ENCODE measurements at regions of chr2 and their contacts with region 1.

Region 1: DNA sequence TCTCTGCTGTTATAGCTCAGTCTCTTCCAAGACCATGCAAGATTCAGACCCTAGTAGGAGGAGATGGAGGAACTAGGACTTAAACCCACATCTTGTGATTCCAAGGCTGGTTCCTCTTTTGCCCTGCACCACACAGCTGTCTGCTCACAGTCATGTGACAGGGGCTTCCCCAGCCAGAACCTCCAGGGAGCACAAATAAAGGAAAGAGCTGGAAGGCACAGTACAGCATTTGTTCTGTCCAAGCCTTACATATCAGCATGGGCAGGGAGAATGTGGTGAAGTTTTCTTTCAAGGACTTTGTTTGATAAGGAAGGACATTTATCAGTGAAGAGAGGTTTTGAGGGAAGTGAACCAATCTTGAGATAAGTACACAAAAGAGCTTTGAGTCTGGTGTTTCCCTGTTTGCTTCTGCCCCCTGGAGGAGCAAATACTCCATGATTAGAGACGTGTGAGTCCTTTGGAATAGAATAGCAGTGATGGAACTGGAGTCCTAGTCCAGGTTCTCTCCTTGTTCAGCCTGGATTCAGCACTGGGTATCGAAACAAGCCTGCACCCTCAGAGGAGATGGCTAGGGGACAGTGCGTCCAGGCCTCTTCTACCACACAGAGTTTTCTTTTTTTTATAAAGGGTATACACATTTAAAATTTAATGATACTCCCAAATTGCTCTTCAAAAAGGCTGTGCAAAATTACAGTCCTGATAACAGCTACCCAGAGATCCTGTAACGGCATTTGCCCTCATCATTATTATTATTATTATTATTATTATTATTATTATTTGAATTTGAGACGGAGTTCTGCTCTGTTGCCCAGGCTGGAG is 24.6 kb upstream of the CASP10 start:
- DNase-seq: peak in 13 of 14 experiments; percentile 20 to 84 (median 50)
- ATAC-seq: peak; percentile 93
- H3K4me3 ChIP-seq: no peak overlapping the region
- H3K4me3 Mint-ChIP-seq: no peak overlapping the region
- H3K27ac ChIP-seq: peak overlapping the region; percentile 52 to 63
- H3K27ac Mint-ChIP-seq: peak overlapping the region; percentile 82
- H3K4me1 ChIP-seq: peaks cover 13% of the 10 kb centered on the region
- H3K4me1 Mint-ChIP-seq: peaks cover 12% of the 10 kb centered on the region
- H3K27me3 ChIP-seq: no peaks in the 10 kb centered on the region
- H3K27me3 Mint-ChIP-seq: no peaks in the 10 kb centered on the region
- CTCF ChIP-seq: peak; percentile 70

Region 2: DNA sequence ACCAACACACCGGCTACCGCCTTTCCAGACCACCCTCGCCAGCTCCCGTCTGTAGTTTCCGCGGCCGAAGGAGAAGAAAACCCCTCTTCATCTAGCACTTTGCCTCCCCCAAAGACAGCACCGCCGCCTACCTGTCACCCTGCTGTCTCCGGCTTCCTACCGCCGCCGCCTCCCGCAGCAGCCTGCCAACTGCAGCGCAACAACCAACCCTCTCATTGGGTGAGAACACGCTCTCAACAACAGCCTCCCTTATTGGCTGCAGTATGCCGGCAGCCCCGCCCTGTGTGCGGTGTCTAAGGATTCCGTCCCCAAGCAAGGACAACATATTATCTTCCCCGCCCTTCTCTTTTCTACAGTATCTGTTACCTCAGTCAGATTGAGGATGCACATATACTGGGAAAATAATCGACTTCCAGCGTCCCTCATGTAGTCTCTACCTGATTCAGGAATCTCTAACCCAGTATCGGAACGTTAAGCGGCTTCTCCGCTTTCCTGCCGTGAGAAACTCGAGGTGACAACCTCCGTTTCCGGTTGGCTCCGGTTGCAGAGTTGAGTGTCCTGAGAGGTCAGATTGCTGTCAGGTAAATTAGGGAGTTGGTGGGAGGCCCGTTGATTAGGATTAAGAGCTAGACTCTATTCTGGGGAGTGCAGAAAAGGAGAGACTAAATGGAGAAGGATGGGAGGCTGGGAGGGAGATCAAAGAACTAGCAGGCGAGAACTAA is 86.7 kb before region 1 on chr2 and contains the starts of genes HYCC2 and NDUFB3:
- CTCF ChIA-PET with region 1: interaction called, 14 read pairs
- POLR2A ChIA-PET with region 1: interaction called, 7 read pairs
- intact Hi-C with region 1: loop called (anchors 1 to 2 kb)
- DNase-seq: peak; percentile 85 to 98 (median 90)
- ATAC-seq: peak; percentile 92
- H3K4me3 ChIP-seq: peak within 1 kb of the TSS; percentile 87
- H3K4me3 Mint-ChIP-seq: peak within 1 kb of the TSS; percentile 99
- H3K27ac ChIP-seq: peak within 1 kb of the TSS; percentile 84 to 93
- H3K27ac Mint-ChIP-seq: peak within 1 kb of the TSS; percentile 97
- H3K4me1 ChIP-seq: peaks cover 18% of the 10 kb centered on the region
- H3K4me1 Mint-ChIP-seq: peaks cover 50% of the 10 kb centered on the region
- H3K27me3 ChIP-seq: no peaks in the 10 kb centered on the region
- H3K27me3 Mint-ChIP-seq: no peaks in the 10 kb centered on the region
- CTCF ChIP-seq: peak; percentile 39
- total RNA-seq, gene HYCC2: 29.2 to 30.7 TPM
- total RNA-seq, gene NDUFB3: 10.1 to 13.6 TPM

Region 3: GRCh38 chr2:201130524-201131186 is 27.7 kb before region 1 on chr2:
- CTCF ChIA-PET with region 1: interaction called, 7 read pairs
- POLR2A ChIA-PET with region 1: interaction called, 10 read pairs
- intact Hi-C with region 1: no loop called
- DNase-seq: peak in 7 of 14 experiments; percentile 25 to 75 (median 48)
- ATAC-seq: peak; percentile 71
- H3K4me3 ChIP-seq: peak overlapping the region; percentile 25
- H3K4me3 Mint-ChIP-seq: peak overlapping the region; percentile 46
- H3K27ac ChIP-seq: peak overlapping the region; percentile 67 to 69
- H3K27ac Mint-ChIP-seq: peak overlapping the region; percentile 96
- H3K4me1 ChIP-seq: peaks cover 80% of the 10 kb centered on the region
- H3K4me1 Mint-ChIP-seq: peaks cover 78% of the 10 kb centered on the region
- H3K27me3 ChIP-seq: no peaks in the 10 kb centered on the region
- H3K27me3 Mint-ChIP-seq: no peaks in the 10 kb centered on the region
- CTCF ChIP-seq: no peak

Region 4: DNA sequence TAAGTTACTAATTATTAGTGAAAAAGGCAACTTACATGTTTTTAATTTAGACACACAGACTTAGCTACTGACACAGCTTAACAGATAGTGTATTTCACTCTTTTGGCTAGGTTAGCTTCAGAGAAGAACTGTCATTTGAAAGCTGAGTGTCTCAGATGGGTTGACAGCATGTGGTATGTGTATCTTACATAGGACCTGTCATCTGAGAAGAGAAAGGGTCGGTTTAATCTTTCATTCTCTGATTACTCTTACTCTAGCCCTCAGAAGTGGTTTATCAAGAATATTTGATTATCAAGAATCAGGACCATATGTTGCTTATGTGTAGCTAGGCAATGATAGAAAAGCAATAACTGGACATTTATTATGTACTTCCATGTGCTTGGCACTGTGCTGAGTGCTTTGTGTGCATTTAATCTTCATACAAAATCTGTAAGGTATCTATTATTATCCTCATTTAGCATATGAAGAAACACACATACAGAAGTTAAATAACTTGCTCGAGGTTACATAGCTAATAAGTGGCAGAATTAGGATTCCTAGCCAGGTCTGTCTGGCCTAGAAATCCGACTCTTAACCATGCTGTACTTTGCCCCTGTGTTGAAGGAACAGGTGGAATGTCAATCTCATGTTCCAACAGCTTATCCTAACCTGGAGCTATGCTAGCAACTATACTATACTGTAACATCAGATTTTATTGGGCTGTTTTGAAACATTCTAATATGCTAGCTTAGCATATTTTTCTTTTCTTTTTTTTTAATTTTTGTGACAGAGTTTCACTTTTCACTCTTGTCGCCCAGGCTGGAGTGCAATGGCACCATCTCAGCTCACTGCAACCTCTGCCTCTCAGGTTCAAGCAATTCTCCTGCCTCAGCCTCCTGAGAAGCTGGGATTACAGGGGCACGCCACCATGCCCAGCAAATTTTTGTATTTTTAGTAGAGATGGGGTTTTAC is 13.9 kb before region 1 on chr2:
- CTCF ChIA-PET with region 1: interaction called, 16 read pairs
- POLR2A ChIA-PET with region 1: interaction called, 5 read pairs
- intact Hi-C with region 1: no loop called
- DNase-seq: no peak
- ATAC-seq: no peak
- H3K4me3 ChIP-seq: no peak overlapping the region
- H3K4me3 Mint-ChIP-seq: no peak overlapping the region
- H3K27ac ChIP-seq: no peak overlapping the region
- H3K27ac Mint-ChIP-seq: peak overlapping the region; percentile 9
- H3K4me1 ChIP-seq: no peaks in the 10 kb centered on the region
- H3K4me1 Mint-ChIP-seq: peaks cover 19% of the 10 kb centered on the region
- H3K27me3 ChIP-seq: no peaks in the 10 kb centered on the region
- H3K27me3 Mint-ChIP-seq: no peaks in the 10 kb centered on the region
- CTCF ChIP-seq: no peak

Region 5: GRCh38 chr2:201242571-201243277 is 84.4 kb after region 1 on chr2:
- CTCF ChIA-PET with region 1: no interaction called
- POLR2A ChIA-PET with region 1: no interaction called
- intact Hi-C with region 1: no loop called
- DNase-seq: no peak
- ATAC-seq: no peak
- H3K4me3 ChIP-seq: no peak overlapping the region
- H3K4me3 Mint-ChIP-seq: no peak overlapping the region
- H3K27ac ChIP-seq: peak overlapping the region in 1 of 2 donors; percentile 3
- H3K27ac Mint-ChIP-seq: peak overlapping the region; percentile 69
- H3K4me1 ChIP-seq: peaks cover 37% of the 10 kb centered on the region
- H3K4me1 Mint-ChIP-seq: peaks cover 67% of the 10 kb centered on the region
- H3K27me3 ChIP-seq: no peaks in the 10 kb centered on the region
- H3K27me3 Mint-ChIP-seq: no peaks in the 10 kb centered on the region
- CTCF ChIP-seq: no peak